Natural killer cell (primary cell): ENCODE measurements at regions of chr15 and their contacts with region 1.

Region 1: DNA sequence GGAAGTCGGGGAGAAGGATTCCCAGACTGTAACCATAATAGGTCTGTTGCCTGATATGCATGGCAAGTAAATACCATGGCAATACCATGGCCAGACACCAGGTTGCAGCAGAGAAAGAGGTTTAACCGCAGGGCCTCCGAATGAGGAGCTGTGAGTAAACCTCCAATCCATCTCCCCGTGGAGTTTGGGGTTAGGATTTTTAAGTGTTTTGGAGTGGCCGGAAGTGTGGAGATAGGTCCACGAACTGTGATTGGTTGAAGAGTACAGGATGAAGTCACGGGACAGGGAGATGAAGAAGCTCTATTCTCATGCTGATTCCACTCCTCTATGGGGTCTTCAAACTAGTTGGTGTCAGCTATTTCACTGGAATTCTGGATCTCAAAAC is 127.9 kb downstream of the ST8SIA2 start:
- DNase-seq: peak in 1 of 2 donors; percentile 60
- ATAC-seq: peak in 1 of 3 donors; percentile 75
- H3K4me3 ChIP-seq: no peak overlapping the region
- H3K4me3 Mint-ChIP-seq: no peak overlapping the region
- H3K27ac ChIP-seq: no peak overlapping the region
- H3K27ac Mint-ChIP-seq: no peak overlapping the region
- H3K4me1 ChIP-seq: no peaks in the 10 kb centered on the region
- H3K4me1 Mint-ChIP-seq: no peaks in the 10 kb centered on the region
- H3K27me3 ChIP-seq: no peaks in the 10 kb centered on the region
- H3K27me3 Mint-ChIP-seq: peaks cover 4 to 8% of the 10 kb centered on the region in 2 donors
- CTCF ChIP-seq: no peak

Region 2: GRCh38 chr15:92599394-92599970 is 77.9 kb after region 1 on chr15:
- intact Hi-C with region 1: no loop called
- DNase-seq: no peak
- ATAC-seq: no peak
- H3K4me3 ChIP-seq: no peak overlapping the region
- H3K4me3 Mint-ChIP-seq: no peak overlapping the region
- H3K27ac ChIP-seq: no peak overlapping the region
- H3K27ac Mint-ChIP-seq: no peak overlapping the region
- H3K4me1 ChIP-seq: no peaks in the 10 kb centered on the region
- H3K4me1 Mint-ChIP-seq: no peaks in the 10 kb centered on the region
- H3K27me3 ChIP-seq: no peaks in the 10 kb centered on the region
- H3K27me3 Mint-ChIP-seq: peaks cover 3 to 8% of the 10 kb centered on the region in 2 donors
- CTCF ChIP-seq: no peak

Region 3: DNA sequence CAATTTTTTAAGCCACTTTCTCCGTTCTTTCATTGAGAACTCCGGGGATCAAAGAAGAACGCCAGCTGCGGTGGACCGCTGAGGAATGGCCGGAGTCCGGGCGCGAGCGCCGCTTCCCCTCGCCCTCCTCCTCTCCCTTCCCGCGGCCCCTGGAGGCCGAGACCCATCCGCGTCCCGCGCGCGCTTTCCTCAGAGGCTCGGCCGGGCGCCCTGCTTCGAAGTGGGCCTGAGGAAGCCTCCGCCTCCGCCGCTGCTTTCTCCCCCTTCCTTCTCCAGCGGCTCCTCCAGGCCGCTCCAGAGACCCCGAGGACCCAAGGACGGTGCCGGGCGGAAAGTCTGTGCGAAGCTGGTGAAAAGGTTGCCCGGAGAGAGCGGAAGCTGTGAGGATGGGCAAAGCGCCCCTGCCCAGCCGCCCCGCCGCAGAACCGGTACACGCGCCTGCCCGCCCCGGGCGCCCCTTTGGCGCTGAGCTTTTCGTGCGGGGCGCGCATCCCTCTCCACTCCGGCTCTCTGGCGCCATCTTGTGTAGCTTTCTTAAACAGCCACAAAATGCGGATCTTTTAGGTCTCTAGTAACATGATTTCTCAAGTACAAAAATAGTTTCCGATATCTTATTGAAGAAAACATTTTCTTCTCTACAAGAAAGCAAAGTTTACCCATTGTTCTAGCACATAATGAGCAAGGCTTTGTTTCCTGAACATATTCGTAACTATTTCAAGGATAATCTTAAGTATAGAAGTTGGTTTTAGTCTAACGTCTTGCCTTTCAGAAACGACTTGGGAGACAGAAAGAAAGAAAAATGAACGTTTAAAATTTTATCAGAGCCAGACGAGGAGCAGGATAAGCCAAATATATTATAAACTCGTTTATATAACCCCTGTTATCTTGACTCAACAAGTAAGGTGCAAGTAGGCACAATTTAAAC is 193.1 kb after region 1 on chr15:
- intact Hi-C with region 1: loop called (anchors 1 kb)
- DNase-seq: peak; percentile 56 to 86
- ATAC-seq: peak; percentile 87 to 98 (median 95)
- H3K4me3 ChIP-seq: peak overlapping the region; percentile 7
- H3K4me3 Mint-ChIP-seq: peak overlapping the region; percentile 83
- H3K27ac ChIP-seq: no peak overlapping the region
- H3K27ac Mint-ChIP-seq: no peak overlapping the region
- H3K4me1 ChIP-seq: peaks cover 8% of the 10 kb centered on the region
- H3K4me1 Mint-ChIP-seq: peaks cover 7 to 11% of the 10 kb centered on the region in 2 donors
- H3K27me3 ChIP-seq: peaks cover 10% of the 10 kb centered on the region
- H3K27me3 Mint-ChIP-seq: peaks cover 6 to 11% of the 10 kb centered on the region in 2 donors
- CTCF ChIP-seq: peak; percentile 84